A549 (cell line): ENCODE measurements at regions of chrX and their contacts with region 1.

Region 1: GRCh38 chrX:39760930-39761329 is 336.8 kb downstream of the BCOR start:
- DNase-seq: no peak
- ATAC-seq: no peak
- H3K4me3 ChIP-seq: no peak overlapping the region
- H3K27ac ChIP-seq: peak overlapping the region; percentile 99
- H3K4me1 ChIP-seq: peaks cover 65% of the 10 kb centered on the region
- CTCF ChIP-seq: no peak
- EP300 ChIP-seq: no peak
- POLR2A ChIP-seq: no peak
- RAD21 ChIP-seq: no peak

Region 2: DNA sequence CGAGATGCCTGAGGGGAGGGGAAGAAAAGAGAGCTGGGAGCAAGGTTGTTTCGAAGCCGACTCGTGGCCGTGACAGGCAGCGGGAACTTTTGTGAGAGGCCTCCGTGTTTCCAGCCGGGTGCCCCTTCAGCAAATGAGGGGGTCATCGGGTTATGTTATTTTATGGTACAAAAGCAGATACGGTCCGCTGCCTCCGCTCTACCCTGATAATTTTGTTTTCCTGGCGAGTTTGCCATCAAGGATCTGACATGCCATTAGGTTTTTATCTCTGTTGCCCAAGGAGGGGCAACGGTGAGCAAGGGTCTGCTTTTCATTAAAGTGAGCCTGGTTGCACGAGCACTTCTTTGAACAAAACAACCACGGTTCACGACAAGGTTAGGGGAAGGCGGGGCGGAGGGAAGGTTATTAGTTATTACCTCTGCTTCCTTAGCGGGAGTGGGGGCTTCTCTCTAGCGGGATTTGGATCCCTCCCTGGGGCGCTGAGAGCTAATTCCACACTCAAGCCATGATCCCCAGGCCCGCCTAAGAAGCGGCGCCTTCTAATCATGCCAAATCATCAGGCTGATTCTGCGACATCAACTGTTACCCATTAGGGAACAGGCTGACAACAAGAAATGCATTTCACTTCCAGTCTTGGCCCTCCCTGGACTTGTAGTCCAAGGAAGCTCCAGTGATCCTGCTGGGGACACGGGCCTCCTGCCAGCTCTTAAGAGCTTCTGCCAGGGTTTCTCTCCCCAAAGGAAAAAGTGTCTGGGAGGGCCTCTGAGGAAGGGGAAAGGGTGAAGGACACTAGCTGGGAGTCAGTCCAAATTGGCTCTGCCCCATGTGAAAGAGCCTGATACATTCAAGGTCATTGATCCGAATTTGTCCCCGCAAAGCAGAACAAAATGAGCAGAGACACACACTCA is 341.9 kb before region 1 on chrX:
- CTCF ChIA-PET with region 1: no interaction called
- POLR2A ChIA-PET with region 1: no interaction called
- DNase-seq: no peak
- ATAC-seq: no peak
- H3K4me3 ChIP-seq: no peak overlapping the region
- H3K27ac ChIP-seq: no peak overlapping the region
- H3K4me1 ChIP-seq: no peaks in the 10 kb centered on the region
- CTCF ChIP-seq: no peak
- EP300 ChIP-seq: no peak
- POLR2A ChIP-seq: no peak
- RAD21 ChIP-seq: no peak

Region 3: DNA sequence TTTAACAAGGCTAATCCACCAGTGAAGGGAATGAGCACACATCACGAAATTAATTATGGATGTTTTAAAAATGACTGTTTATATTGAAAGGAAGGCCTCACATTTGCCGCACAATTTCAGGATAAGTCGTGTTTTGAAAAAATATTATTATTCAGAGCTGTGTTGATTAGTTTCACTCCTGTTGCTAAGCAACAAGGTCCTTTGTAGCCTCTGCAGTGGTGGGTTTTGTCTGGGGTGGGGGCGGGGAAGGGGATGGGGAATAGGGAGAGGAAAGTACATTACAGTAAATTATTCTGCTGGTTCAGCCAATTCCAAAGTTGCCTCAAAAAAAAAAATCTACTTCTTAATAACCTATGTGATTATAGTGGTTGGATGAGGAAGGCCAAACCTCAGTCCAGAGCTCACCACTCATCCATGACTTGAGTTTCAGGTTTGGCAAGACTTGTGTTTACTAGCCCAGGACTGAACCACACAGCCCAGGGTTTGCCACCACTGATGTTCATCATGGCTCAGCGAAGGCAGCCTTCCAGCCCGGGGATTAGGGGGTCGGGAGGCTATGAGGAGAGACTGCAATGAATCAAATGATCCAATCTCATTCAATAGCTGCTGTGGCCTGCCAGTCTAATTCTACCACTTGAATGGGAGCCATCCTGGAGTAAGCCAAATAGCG is 657.4 kb after region 1 on chrX:
- CTCF ChIA-PET with region 1: no interaction called
- POLR2A ChIA-PET with region 1: interaction called, 13 read pairs
- DNase-seq: no peak
- ATAC-seq: no peak
- H3K4me3 ChIP-seq: no peak overlapping the region
- H3K27ac ChIP-seq: no peak overlapping the region
- H3K4me1 ChIP-seq: no peaks in the 10 kb centered on the region
- CTCF ChIP-seq: no peak
- EP300 ChIP-seq: no peak
- POLR2A ChIP-seq: no peak
- RAD21 ChIP-seq: no peak